CD4-positive, alpha-beta memory T cell (primary cell): ENCODE measurements at regions of chr6 and their contacts with region 1.

Region 1: DNA sequence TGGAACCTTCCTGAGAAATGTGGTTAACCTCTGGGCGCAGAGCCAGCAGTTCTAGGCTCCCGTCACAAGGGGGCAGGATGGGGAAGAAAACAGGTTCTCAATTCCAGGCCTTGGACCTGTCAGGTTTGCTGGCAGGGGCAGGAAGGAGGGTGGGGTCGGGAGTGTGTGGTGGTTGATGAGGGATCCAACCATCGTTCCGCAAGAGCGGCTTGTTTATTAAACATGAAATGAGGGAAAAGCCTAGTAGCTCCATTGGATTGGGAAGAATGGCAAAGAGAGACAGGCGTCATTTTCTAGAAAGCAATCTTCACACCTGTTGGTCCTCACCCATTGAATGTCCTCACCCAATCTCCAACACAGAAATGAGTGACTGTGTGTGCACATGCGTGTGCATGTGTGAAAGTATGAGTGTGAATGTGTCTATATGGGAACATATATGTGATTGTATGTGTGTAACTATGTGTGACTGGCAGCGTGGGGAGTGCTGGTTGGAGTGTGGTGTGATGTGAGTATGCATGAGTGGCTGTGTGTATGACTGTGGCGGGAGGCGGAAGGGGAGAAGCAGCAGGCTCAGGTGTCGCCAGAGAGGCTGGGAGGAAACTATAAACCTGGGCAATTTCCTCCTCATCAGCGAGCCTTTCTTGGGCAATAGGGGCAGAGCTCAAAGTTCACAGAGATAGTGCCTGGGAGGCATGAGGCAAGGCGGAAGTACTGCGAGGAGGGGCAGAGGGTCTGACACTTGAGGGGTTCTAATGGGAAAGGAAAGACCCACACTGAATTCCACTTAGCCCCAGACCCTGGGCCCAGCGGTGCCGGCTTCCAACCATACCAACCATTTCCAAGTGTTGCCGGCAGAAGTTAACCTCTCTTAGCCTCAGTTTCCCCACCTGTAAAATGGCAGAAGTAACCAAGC is 29.6 kb downstream of the SRSF3 start:
- DNase-seq: peak; percentile 65 to 78 (median 73)
- H3K4me3 ChIP-seq: no peak overlapping the region
- H3K4me3 Mint-ChIP-seq: no peak overlapping the region
- H3K27ac ChIP-seq: no peak overlapping the region
- H3K27ac Mint-ChIP-seq: peak overlapping the region; percentile 32 to 82 (median 69)
- H3K4me1 ChIP-seq: peaks cover 9% of the 10 kb centered on the region
- H3K4me1 Mint-ChIP-seq: peaks cover 5 to 16% (median 9%) of the 10 kb centered on the region in 4 donors
- H3K27me3 ChIP-seq: no peaks in the 10 kb centered on the region
- H3K27me3 Mint-ChIP-seq: no peaks in the 10 kb centered on the region

Region 2: DNA sequence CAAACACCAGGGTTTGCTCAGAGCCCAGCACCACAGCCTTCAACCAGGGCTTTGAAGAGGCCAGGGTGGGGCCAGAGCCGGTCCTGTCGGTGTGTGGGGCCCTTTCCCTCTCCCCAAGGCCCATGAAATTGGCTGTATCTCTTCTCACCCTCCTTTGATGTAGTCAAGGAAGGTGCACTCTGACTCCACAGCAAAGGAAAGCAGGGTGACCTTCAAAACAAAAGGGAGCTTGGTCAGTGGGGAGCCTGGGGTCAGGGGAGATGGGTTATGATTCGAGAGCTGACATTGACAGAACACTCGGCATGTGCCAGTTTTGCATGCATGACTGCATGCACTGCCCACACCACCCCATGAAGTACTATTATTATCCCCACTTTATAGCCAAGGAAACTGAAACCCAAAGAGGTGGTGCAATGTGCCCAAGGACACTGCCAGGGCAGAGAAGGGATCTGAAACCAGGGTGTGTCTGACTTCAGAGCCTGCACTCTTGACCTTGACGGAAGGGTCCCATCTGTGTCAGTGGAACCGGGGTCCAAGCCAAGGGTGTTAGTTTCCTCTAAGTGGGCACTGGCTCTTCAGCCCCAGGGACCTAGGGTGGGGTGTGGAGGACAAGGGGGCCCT is 129.2 kb after region 1 on chr6:
- CTCF ChIA-PET with region 1: interaction called, 66 read pairs
- POLR2A ChIA-PET with region 1: interaction called, 7 read pairs
- intact Hi-C with region 1: no loop called
- DNase-seq: no peak
- H3K4me3 ChIP-seq: no peak overlapping the region
- H3K4me3 Mint-ChIP-seq: peak overlapping the region in 1 of 8 donors; percentile 13
- H3K27ac ChIP-seq: peak overlapping the region; percentile 45
- H3K27ac Mint-ChIP-seq: peak overlapping the region; percentile 4 to 97 (median 85)
- H3K4me1 ChIP-seq: peaks cover 63% of the 10 kb centered on the region
- H3K4me1 Mint-ChIP-seq: peaks cover 45 to 68% (median 57%) of the 10 kb centered on the region in 4 donors
- H3K27me3 ChIP-seq: no peaks in the 10 kb centered on the region
- H3K27me3 Mint-ChIP-seq: no peaks in the 10 kb centered on the region

Region 3: GRCh38 chr6:36874443-36875249 is 250.8 kb after region 1 on chr6 and contains the start of gene PPIL1:
- CTCF ChIA-PET with region 1: no interaction called
- POLR2A ChIA-PET with region 1: no interaction called
- intact Hi-C with region 1: no loop called
- DNase-seq: peak; percentile 91 to 94 (median 92)
- H3K4me3 ChIP-seq: peak within 1 kb of the TSS; percentile 95 to 96
- H3K4me3 Mint-ChIP-seq: peak within 1 kb of the TSS; percentile 95 to 100 (median 98)
- H3K27ac ChIP-seq: peak within 1 kb of the TSS; percentile 87
- H3K27ac Mint-ChIP-seq: peak within 1 kb of the TSS; percentile 91 to 100 (median 98)
- H3K4me1 ChIP-seq: peaks cover 23% of the 10 kb centered on the region
- H3K4me1 Mint-ChIP-seq: peaks cover 22 to 37% (median 31%) of the 10 kb centered on the region in 4 donors
- H3K27me3 ChIP-seq: no peaks in the 10 kb centered on the region
- H3K27me3 Mint-ChIP-seq: peaks cover 0 to 1% of the 10 kb centered on the region in 2 donors
- total RNA-seq, gene PPIL1: 8.4 to 9.2 TPM